ENCODE measurements at regions of chr3 and their contacts with region 1.

Region 1: GRCh38 chr3:66378256-66378823 is 122.5 kb downstream of the LRIG1 start:
- DNase-seq: no peak
- H3K4me3 ChIP-seq: no peak overlapping the region
- H3K27me3 ChIP-seq: no peaks in the 10 kb centered on the region
- CTCF ChIP-seq: peak; percentile 60

Region 2: GRCh38 chr3:66394019-66394752 is 15.8 kb after region 1 on chr3:
- CTCF ChIA-PET with region 1: interaction called, 13 read pairs
- POLR2A ChIA-PET with region 1: no interaction called
- DNase-seq: no peak
- H3K4me3 ChIP-seq: no peak overlapping the region
- H3K27me3 ChIP-seq: no peaks in the 10 kb centered on the region
- CTCF ChIP-seq: no peak

Measured in BJ (cell line).